ENCODE measurements at regions of chr4 and their contacts with region 1.

Region 1: DNA sequence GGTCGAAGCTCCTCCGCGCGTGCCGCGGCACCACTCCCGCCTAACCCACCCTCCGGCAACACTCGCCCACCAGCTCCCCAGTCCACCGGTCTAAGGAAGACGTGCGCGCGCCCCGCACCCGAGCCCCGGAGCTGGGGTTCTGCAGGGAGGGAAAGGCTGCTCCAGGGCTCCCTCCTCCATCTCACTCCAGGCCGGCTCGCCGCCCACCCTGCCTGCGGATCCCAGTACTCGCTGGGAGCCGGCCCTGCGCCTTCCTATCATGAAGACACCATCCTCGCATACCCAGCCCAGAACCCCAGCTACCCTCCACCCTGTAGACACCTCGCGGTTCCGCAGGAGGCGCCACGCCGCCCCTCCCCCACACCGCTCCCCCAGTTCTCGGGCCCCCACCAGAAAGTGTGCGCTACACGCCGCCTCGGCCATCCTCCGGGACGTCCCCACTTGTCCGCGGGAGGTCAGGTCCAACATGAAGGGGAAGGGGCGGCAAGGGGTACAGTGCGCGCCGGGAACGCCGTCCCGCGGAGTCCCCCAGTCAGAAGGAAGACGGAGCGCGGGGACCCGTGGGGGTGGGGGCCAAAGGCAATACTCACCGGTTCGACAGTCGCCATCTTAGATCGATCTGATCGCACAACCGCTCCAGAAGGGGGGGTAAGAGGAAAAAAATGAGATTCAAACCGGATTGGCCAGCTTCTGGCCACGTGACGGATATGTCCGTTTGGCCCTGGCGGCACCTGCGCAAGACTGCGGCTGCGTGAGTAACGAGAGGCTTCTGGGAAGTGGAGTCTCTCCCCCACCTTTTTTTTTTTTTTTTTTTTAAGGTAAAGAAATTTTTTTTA is at the start of gene EIF4E:
- DNase-seq: peak; percentile 88 to 99 (median 96)

Region 2: GRCh38 chr4:98260579-98261290 is 668.0 kb before region 1 on chr4:
- intact Hi-C with region 1: loop called (anchors 10 kb)
- DNase-seq: peak; percentile 69 to 98 (median 94)

Region 3: DNA sequence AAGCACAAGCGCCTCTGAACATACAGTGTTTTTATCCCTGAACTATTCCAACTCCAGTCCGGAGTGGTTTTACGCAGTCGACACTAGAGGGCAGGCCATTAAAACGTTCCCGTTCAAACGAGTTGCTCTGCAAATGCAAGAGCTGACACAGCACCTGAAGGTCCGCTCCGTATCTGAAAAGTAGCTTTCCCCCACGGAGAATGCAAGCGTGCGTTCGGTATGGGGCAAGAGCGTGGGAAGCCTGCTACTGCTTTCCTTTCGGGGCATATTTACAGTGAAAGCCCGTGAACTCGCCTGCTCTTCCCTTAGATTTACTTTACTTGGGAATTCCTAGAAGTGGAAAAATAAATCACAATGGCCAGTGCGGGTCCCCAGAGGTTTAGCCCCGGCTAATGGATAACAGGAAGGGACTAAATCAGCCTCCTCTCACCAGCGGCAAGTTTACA is 461.1 kb before region 1 on chr4:
- intact Hi-C with region 1: loop called (anchors 5 kb)
- DNase-seq: peak; percentile 59 to 94 (median 84)

Region 4: DNA sequence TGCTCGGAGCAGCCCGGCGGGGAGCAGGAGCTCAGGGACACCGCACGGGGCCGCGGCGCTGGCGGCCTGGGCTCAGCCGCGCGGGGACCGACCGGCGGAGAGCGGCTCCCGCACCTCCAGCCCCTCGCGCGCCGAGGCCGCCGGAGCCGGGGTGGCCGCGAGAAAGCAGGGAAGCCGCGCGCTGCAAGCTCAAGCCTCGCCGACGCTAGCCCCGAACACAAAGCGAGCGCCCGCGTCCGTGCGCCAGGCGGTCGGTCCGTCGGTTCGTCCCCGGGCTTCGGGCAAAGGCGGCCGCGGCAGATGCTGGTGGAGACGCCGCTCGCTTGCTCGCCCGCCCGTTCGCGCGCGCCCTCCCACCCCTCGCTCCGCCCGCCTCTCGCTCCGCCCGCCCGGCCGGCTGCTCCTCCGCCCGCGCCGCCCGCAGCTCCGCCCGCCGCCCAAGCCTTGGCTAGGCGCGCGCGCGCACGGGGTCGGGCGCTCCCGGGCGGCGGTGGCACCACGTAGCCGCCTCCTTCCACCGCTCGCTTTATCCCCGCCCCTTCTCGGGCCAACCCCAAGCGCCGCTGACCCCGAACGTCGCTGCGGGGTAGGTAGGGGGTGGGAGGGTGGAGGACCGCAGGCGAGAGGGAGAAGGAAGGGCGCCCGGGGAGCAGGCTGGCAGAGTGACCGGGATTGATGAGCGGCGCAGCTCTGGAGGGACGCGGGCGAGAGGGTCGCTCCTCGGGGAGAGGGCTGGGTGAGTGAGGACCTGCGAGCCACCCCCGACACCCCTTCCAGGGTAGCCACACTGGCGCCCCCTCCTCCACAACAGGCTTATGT is 270.2 kb before region 1 on chr4 and contains the start of gene TSPAN5:
- intact Hi-C with region 1: loop called (anchors 5 kb)
- DNase-seq: peak; percentile 32 to 94 (median 86)

Region 5: GRCh38 chr4:98995183-98996055 is 66.7 kb after region 1 on chr4 and contains the start of gene METAP1:
- intact Hi-C with region 1: loop called (anchors 2 kb)
- DNase-seq: peak; percentile 82 to 97 (median 93)

Region 6: DNA sequence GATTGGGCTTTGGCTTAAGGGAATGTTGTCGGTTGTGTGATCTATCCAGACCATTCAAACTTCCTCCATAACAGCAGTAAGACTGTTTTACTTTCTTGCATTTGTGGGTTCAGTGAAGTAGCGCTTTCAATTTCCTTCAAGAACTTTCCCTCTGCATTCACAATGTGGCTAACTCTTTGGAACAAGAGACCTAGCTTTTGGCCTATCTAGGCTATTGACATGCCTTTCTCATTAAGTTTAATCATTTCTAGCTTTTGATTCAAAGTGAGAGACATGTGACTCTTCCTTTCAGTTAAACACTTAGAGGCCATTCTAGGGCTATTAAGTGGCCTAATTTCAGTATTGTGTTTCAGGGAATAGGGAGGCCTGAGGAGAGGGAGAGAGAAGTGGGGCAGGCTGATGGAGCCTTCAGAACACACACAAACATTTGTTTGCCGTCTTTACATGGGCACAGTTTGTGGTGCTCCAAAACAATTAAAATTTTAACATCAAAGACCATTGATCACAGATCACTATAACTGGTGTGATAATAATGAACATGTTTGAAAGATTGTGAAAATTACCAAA is 125.8 kb after region 1 on chr4:
- intact Hi-C with region 1: loop called (anchors 10 kb)
- DNase-seq: no peak